Heart right ventricle (tissue), 16 donors: ENCODE measurements at regions of chr11 and their contacts with region 1.

Region 1: GRCh38 chr11:8800520-8801110 is 110.4 kb upstream of the AKIP1 start:
- DNase-seq: no peak
- ATAC-seq: peak in 3 of 8 donors; percentile 26 to 60 (median 32)
- H3K4me3 ChIP-seq: no peak overlapping the region
- H3K27ac ChIP-seq: peak overlapping the region in 6 of 10 donors; percentile 1 to 55 (median 31)
- H3K4me1 ChIP-seq: peaks cover 10 to 72% (median 50%) of the 10 kb centered on the region in 9 donors
- H3K27me3 ChIP-seq: no peaks in the 10 kb centered on the region
- CTCF ChIP-seq: no peak

Region 2: GRCh38 chr11:8403310-8403709 is 397.3 kb before region 1 on chr11:
- intact Hi-C with region 1: no loop called
- DNase-seq: no peak
- ATAC-seq: no peak
- H3K4me3 ChIP-seq: no peak overlapping the region
- H3K27ac ChIP-seq: no peak overlapping the region
- H3K4me1 ChIP-seq: no peaks in the 10 kb centered on the region
- H3K27me3 ChIP-seq: no peaks in the 10 kb centered on the region
- CTCF ChIP-seq: no peak

Region 3: DNA sequence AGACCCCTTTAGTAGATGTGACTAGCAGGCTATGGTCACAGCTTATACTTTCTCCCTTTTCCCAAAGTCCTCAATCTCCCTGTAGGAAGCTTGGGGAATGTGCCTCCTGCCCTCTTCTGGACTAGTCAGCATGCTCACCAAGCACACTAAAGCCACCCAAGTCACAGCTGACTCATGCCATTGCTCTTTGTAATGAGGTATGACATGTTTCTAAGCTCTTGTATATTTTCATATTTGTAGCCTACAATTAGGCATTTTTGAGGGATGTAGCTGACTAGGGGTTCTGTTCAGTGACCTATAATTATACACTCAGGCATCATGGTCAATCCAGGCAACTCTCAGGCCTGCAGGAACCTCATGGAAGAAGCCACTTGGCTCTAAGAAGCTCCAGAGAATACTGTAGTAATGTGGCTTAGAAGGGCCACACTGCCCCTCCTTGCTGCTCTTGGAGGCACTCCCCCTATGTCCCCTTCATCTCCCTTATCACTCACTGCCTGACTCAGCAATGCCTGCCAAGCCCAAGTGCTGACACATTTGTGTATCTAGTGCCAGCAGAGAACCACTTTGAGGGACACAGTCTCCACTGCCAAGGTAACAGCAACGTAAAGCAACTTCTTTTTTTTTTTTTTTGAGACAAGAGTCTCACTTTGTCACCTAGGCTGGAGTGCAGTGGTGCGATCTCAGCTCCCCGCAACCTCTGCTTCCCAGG is 31.8 kb before region 1 on chr11:
- intact Hi-C with region 1: loop called in 3 of 10 experiments (anchors 5 kb)
- DNase-seq: peak; percentile 53 to 74
- ATAC-seq: peak; percentile 70 to 94 (median 86)
- H3K4me3 ChIP-seq: no peak overlapping the region
- H3K27ac ChIP-seq: peak overlapping the region; percentile 31 to 83 (median 70)
- H3K4me1 ChIP-seq: peaks cover 22 to 96% (median 58%) of the 10 kb centered on the region in 9 donors
- H3K27me3 ChIP-seq: no peaks in the 10 kb centered on the region
- CTCF ChIP-seq: peak in 5 of 9 donors; percentile 2 to 51 (median 34)

Region 4: DNA sequence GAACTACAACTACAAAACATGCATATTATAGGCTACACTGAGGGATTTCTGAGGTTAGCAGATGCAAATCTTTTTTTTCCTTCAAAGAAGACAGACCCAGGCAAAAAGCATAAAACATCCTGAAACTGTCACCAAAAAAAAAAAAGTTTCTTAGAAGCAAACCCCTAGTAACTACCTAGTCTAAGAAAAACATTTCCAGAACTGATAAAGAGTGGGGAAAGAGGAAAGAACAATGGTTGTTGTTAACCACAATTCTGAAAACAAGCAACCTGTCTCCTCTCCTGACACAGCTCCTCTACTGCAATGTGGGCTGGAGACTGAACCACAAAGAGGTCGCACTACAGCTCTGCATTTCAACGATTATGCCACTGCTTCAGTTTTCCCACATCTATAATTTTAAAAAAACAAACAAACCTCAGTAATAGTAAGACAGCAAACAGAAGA is 449.5 kb after region 1 on chr11:
- intact Hi-C with region 1: no loop called
- DNase-seq: no peak
- ATAC-seq: peak in 2 of 8 donors; percentile 35
- H3K4me3 ChIP-seq: no peak overlapping the region
- H3K27ac ChIP-seq: peak overlapping the region in 6 of 10 donors; percentile 7 to 83 (median 30)
- H3K4me1 ChIP-seq: peaks cover 3 to 82% (median 51%) of the 10 kb centered on the region in 9 donors
- H3K27me3 ChIP-seq: no peaks in the 10 kb centered on the region
- CTCF ChIP-seq: no peak